Naive thymus-derived CD4-positive, alpha-beta T cell (primary cell): ENCODE measurements at regions of chr4 and their contacts with region 1.

Region 1: DNA sequence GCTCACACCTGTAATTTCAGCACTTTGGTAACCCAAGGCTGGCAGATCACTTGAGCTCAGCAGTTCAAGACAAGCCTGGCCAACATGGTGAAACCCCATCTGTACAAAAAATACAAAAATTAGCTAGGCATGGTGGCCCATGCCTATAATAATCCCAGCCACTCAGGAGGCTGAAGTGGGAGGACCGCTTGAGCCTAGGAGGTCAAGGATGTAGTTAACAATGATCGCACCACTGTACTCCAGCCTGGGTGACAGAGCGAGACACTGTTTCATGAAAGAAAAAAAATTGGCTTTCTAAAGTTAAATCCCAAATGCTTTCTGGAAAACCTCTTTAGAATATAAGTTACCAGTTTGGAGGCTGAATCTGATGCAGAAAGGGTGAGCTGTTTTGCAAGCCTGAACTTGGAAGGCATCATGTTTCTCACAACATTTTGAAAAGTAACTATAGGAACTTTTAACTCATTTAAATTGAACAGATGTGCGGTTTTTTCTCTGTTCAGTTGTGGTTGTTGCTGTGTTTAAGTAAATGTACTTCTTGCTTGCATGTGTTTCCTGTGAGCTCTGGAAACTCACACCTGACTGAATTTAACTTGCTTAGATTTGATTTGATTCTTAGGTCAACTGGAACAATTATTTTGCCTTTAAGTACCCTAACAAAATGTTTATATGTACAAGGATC is 39.8 kb upstream of the TMEM131L start:
- DNase-seq: peak in 7 of 9 donors; percentile 68 to 89 (median 82)
- ATAC-seq: peak; percentile 88
- H3K4me3 ChIP-seq: peak overlapping the region; percentile 5
- H3K4me3 Mint-ChIP-seq: peak overlapping the region in 9 of 10 donors; percentile 47 to 80 (median 76)
- H3K27ac ChIP-seq: peak overlapping the region; percentile 79
- H3K27ac Mint-ChIP-seq: peak overlapping the region; percentile 88 to 98 (median 96)
- H3K4me1 ChIP-seq: peaks cover 18 to 57% of the 10 kb centered on the region in 2 donors
- H3K4me1 Mint-ChIP-seq: peaks cover 22 to 69% (median 62%) of the 10 kb centered on the region in 7 donors
- H3K27me3 ChIP-seq: no peaks in the 10 kb centered on the region
- H3K27me3 Mint-ChIP-seq: no peaks in the 10 kb centered on the region

Region 2: GRCh38 chr4:152479428-152480026 is 946.8 kb before region 1 on chr4:
- CTCF ChIA-PET with region 1: no interaction called
- POLR2A ChIA-PET with region 1: no interaction called
- intact Hi-C with region 1: no loop called
- DNase-seq: no peak
- ATAC-seq: peak; percentile 27
- H3K4me3 ChIP-seq: no peak overlapping the region
- H3K4me3 Mint-ChIP-seq: no peak overlapping the region
- H3K27ac ChIP-seq: no peak overlapping the region
- H3K27ac Mint-ChIP-seq: peak overlapping the region in 1 of 9 donors; percentile 36
- H3K4me1 ChIP-seq: no peaks in the 10 kb centered on the region
- H3K4me1 Mint-ChIP-seq: peaks cover 28 to 59% (median 52%) of the 10 kb centered on the region in 7 donors
- H3K27me3 ChIP-seq: no peaks in the 10 kb centered on the region
- H3K27me3 Mint-ChIP-seq: no peaks in the 10 kb centered on the region

Region 3: DNA sequence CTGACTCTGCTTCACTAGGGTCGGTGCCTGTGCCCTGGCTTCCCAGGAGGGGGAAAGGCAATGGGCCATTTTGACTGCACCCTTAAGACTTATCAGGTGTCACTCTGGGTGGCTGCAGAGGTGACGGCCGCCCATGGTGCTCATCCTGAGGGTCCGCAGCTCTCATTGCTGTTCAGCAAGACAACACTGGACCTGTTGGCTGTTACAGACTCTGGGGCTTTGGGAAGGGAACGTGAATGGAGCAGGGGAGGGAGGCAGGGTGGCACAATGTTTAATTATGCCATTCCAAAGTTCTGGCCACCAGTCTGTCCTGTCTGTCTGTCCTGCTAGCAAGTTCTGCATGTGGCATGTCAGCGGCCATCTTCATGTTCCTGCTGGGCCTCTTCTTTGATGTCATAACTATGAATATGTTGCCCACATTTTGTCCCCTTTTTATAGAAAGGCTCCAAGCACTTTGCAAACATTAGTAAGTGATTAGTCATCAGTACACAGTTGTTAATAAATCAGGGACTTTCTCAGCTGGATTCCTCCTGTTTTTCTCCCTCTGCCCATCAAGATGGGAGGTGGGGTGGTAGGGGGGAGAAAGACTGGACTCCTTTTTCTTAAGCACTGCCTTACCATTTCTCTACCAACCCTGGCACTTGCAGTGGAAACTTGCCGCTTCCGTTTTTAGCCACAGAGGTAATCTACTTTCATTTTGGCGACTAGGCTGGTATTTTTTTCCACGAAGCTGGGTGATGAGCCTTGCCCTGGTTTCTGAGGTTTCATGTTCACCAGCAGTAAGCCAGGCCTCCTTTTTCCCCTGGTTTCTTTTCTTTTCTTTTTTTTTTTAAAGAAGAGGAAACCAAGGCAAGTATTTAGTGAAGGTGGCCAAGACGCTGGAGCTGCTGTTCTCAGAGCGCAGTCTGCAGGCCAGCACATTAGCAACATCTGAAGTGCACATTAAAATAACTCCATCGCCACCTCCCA is 310.7 kb before region 1 on chr4:
- CTCF ChIA-PET with region 1: no interaction called
- POLR2A ChIA-PET with region 1: no interaction called
- intact Hi-C with region 1: loop called in 1 of 2 experiments (anchors 10 kb)
- DNase-seq: peak in 8 of 9 donors; percentile 64 to 93 (median 89)
- ATAC-seq: peak; percentile 65
- H3K4me3 ChIP-seq: peak overlapping the region; percentile 46
- H3K4me3 Mint-ChIP-seq: peak overlapping the region in 2 of 10 donors; percentile 70 to 79
- H3K27ac ChIP-seq: peak overlapping the region; percentile 84
- H3K27ac Mint-ChIP-seq: no peak overlapping the region
- H3K4me1 ChIP-seq: peaks cover 43 to 62% of the 10 kb centered on the region in 2 donors
- H3K4me1 Mint-ChIP-seq: peaks cover 0 to 26% (median 11%) of the 10 kb centered on the region in 7 donors
- H3K27me3 ChIP-seq: no peaks in the 10 kb centered on the region
- H3K27me3 Mint-ChIP-seq: peaks cover 0 to 9% (median 0%) of the 10 kb centered on the region in 5 donors

Region 4: DNA sequence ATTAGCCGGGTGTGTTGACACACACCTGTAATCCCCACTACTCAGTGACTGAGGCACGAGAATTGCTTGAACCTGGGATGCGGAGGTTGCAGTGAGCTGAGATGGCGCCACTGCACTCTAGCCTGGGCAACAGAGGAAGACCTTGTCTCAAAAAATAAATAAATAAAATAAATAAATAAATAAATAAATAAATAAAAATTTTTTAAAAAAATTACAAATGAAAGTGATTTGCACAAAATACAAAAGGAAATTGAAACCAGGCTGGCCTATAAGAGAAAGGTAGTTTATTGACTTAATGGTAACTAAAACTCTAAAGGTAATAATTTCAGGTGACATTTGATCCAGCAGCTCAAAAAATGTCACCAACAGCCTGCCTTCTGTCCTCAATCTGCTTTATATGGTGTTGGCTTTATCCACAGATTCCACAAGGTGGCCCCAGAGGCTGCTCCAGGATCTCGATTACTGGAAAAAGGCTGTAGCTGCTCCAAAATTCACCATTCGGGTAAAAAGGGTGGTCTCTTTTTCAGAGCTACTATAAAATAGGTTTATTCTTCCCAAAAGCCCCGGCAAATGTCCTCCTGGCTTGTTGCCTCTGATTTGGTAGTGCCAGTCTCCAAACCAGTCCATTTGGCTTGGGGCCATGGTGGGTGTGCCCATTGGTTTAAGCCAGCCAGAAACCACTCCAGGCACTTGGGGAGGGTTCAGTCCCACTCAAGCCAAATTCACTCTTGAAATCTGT is 283.5 kb before region 1 on chr4:
- CTCF ChIA-PET with region 1: no interaction called
- POLR2A ChIA-PET with region 1: no interaction called
- intact Hi-C with region 1: loop called in 1 of 2 experiments (anchors 5 kb)
- DNase-seq: peak in 8 of 9 donors; percentile 39 to 71 (median 58)
- ATAC-seq: peak; percentile 76
- H3K4me3 ChIP-seq: no peak overlapping the region
- H3K4me3 Mint-ChIP-seq: no peak overlapping the region
- H3K27ac ChIP-seq: no peak overlapping the region
- H3K27ac Mint-ChIP-seq: no peak overlapping the region
- H3K4me1 ChIP-seq: no peaks in the 10 kb centered on the region
- H3K4me1 Mint-ChIP-seq: peaks cover 0 to 4% (median 0%) of the 10 kb centered on the region in 7 donors
- H3K27me3 ChIP-seq: no peaks in the 10 kb centered on the region
- H3K27me3 Mint-ChIP-seq: peaks cover 0 to 14% (median 0%) of the 10 kb centered on the region in 5 donors

Region 5: GRCh38 chr4:153310793-153311192 is 115.6 kb before region 1 on chr4:
- CTCF ChIA-PET with region 1: no interaction called
- POLR2A ChIA-PET with region 1: no interaction called
- intact Hi-C with region 1: no loop called
- DNase-seq: no peak
- ATAC-seq: no peak
- H3K4me3 ChIP-seq: no peak overlapping the region
- H3K4me3 Mint-ChIP-seq: no peak overlapping the region
- H3K27ac ChIP-seq: no peak overlapping the region
- H3K27ac Mint-ChIP-seq: no peak overlapping the region
- H3K4me1 ChIP-seq: no peaks in the 10 kb centered on the region
- H3K4me1 Mint-ChIP-seq: no peaks in the 10 kb centered on the region
- H3K27me3 ChIP-seq: no peaks in the 10 kb centered on the region
- H3K27me3 Mint-ChIP-seq: peaks cover 0 to 2% (median 0%) of the 10 kb centered on the region in 5 donors

Region 6: DNA sequence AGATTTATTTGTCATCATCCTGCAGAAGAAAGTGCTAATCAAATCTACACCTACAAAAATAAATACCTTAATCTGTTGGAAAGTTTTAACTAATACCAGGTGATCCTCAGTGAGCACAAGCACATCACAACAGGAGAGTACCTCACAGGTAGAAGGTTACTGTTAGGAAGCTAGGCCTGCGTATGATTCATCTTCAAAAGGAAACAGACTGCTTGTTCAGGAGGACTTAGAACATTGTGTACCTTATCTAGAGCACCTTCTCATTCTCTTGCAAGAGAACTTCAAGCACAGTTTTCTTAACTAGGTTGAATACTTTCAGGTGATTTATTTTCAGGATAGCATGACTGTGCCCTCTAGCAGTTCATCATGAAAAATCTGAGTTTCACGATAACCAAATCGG is 27.6 kb before region 1 on chr4:
- CTCF ChIA-PET with region 1: interaction called, 3 read pairs
- POLR2A ChIA-PET with region 1: interaction called, 7 read pairs
- intact Hi-C with region 1: loop called in 1 of 2 experiments (anchors 2 kb)
- DNase-seq: peak in 7 of 9 donors; percentile 7 to 72 (median 45)
- ATAC-seq: peak; percentile 62
- H3K4me3 ChIP-seq: no peak overlapping the region
- H3K4me3 Mint-ChIP-seq: peak overlapping the region in 5 of 10 donors; percentile 16 to 47 (median 42)
- H3K27ac ChIP-seq: peak overlapping the region; percentile 18
- H3K27ac Mint-ChIP-seq: peak overlapping the region in 8 of 9 donors; percentile 73 to 93 (median 86)
- H3K4me1 ChIP-seq: peaks cover 0 to 16% of the 10 kb centered on the region in 2 donors
- H3K4me1 Mint-ChIP-seq: peaks cover 2 to 24% (median 20%) of the 10 kb centered on the region in 7 donors
- H3K27me3 ChIP-seq: no peaks in the 10 kb centered on the region
- H3K27me3 Mint-ChIP-seq: no peaks in the 10 kb centered on the region

Region 7: GRCh38 chr4:153409412-153409811 is 16.9 kb before region 1 on chr4:
- CTCF ChIA-PET with region 1: no interaction called
- POLR2A ChIA-PET with region 1: interaction called, 6 read pairs
- intact Hi-C with region 1: loop called in 1 of 2 experiments (anchors 2 kb)
- DNase-seq: no peak
- ATAC-seq: no peak
- H3K4me3 ChIP-seq: no peak overlapping the region
- H3K4me3 Mint-ChIP-seq: no peak overlapping the region
- H3K27ac ChIP-seq: no peak overlapping the region
- H3K27ac Mint-ChIP-seq: no peak overlapping the region
- H3K4me1 ChIP-seq: peaks cover 0 to 3% of the 10 kb centered on the region in 2 donors
- H3K4me1 Mint-ChIP-seq: peaks cover 2 to 22% (median 13%) of the 10 kb centered on the region in 7 donors
- H3K27me3 ChIP-seq: no peaks in the 10 kb centered on the region
- H3K27me3 Mint-ChIP-seq: no peaks in the 10 kb centered on the region

Region 8: DNA sequence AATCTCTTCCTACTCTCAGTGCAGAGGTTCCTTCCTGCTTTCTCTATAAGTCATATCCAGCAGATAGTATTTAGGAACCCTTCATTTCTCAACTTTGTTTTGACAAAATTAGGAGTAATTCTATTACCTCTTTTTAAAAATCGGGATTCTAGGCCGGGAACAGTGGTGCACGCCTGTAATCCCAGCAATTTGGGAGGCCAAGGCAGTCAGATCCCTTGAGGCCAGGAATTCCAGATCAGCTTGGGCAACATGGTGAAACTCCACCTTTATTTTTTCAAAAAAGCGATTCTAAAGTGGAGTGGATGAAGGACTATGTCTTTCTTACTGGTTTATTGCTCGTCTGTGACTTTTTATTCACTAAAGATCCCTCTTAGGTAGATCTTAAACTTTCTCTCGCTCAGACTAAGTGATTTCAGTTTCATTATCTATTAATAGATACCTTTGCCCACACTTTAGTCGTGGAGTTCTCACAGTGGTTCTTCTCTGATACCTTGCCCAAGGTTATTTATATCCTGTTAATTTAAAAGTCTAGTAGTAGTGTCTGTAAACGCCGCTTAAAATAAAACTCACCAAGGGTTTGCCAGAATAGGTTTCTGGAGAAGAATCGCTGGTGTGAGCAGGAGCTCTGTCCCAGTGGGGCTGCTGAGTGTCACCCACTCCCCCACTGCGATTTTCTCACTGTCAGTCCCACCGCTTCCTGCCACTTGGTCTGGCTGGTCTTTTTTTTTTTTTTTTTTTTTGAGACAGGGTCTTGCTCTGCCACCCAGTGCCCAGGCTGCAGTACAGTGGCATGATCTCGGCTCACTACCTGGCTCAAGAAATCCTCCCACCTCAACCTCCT is 12.8 kb after region 1 on chr4:
- CTCF ChIA-PET with region 1: interaction called, 9 read pairs
- POLR2A ChIA-PET with region 1: interaction called, 5 read pairs
- intact Hi-C with region 1: loop called in 1 of 2 experiments (anchors 1 kb)
- DNase-seq: peak in 7 of 9 donors; percentile 33 to 60 (median 53)
- ATAC-seq: peak; percentile 86
- H3K4me3 ChIP-seq: peak overlapping the region; percentile 71
- H3K4me3 Mint-ChIP-seq: peak overlapping the region; percentile 76 to 98 (median 90)
- H3K27ac ChIP-seq: peak overlapping the region; percentile 81
- H3K27ac Mint-ChIP-seq: peak overlapping the region; percentile 78 to 98 (median 93)
- H3K4me1 ChIP-seq: peaks cover 8 to 20% of the 10 kb centered on the region in 2 donors
- H3K4me1 Mint-ChIP-seq: peaks cover 20 to 69% (median 58%) of the 10 kb centered on the region in 7 donors
- H3K27me3 ChIP-seq: no peaks in the 10 kb centered on the region
- H3K27me3 Mint-ChIP-seq: peaks cover 0 to 2% (median 0%) of the 10 kb centered on the region in 5 donors